Dendritic cell treated with granulocyte-macrophage colony-stimulating factor and Interleukin-4, amounts not matched to agents 40 ng/mL and 50 ng/mL, for 4 days (primary cell): ENCODE measurements at regions of chr10 and their contacts with region 1.

Region 1: GRCh38 chr10:17512341-17513001 is 58.1 kb upstream of the ST8SIA6 start:
- H3K4me3 Mint-ChIP-seq: no peak overlapping the region
- H3K27ac Mint-ChIP-seq: peak overlapping the region; percentile 85
- H3K4me1 Mint-ChIP-seq: peaks cover 72% of the 10 kb centered on the region
- H3K27me3 Mint-ChIP-seq: no peaks in the 10 kb centered on the region

Region 2: DNA sequence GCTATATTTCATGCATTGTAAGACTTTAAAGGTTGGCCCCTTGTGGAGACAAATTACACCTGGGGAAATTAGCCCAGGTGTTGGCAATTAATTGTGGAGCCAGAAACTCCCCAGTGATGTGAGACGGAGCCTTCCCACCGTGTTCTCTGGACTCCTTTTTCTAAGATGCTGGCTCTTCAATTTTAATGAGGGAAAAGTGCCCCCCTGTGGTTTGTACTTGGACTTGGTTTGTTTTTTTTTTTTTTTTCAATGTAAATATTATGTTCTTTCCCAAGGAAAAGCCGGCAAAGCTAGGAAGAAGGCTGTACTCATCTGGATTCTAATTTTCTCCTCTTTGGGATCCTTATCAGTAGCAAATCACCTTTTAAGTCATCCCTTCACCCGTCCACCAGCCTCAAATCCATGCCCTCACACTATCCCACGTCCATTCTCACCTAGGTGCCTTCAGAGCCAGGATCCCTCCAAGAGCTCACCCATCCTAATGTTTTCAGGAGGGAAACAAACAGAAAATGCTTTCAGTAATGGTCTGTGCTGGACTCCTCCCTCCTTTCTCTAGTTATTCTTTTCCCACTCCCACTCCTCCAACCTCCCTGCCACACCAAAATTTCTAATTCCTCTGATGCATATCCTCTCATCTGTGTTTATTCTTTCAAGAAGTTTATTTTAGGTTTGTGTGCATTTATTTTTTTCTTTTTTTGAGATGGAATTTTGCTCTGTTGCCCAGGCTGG is 37.7 kb before region 1 on chr10:
- intact Hi-C with region 1: loop called (anchors 5 kb)
- H3K4me3 Mint-ChIP-seq: peak overlapping the region; percentile 14
- H3K27ac Mint-ChIP-seq: peak overlapping the region; percentile 80
- H3K4me1 Mint-ChIP-seq: peaks cover 67% of the 10 kb centered on the region
- H3K27me3 Mint-ChIP-seq: no peaks in the 10 kb centered on the region

Region 3: GRCh38 chr10:17580885-17581284 is 68.4 kb after region 1 on chr10:
- intact Hi-C with region 1: loop called (anchors 5 kb)
- H3K4me3 Mint-ChIP-seq: no peak overlapping the region
- H3K27ac Mint-ChIP-seq: no peak overlapping the region
- H3K4me1 Mint-ChIP-seq: peaks cover 20% of the 10 kb centered on the region
- H3K27me3 Mint-ChIP-seq: no peaks in the 10 kb centered on the region